Naive thymus-derived CD4-positive, alpha-beta T cell (primary cell): ENCODE measurements at regions of chr6 and their contacts with region 1.

Region 1: GRCh38 chr6:15327271-15327670 is 81.4 kb downstream of the JARID2 start:
- DNase-seq: peak in 7 of 9 donors; percentile 26 to 59 (median 48)
- ATAC-seq: peak; percentile 74
- H3K4me3 ChIP-seq: no peak overlapping the region
- H3K4me3 Mint-ChIP-seq: peak overlapping the region in 5 of 10 donors; percentile 12 to 48 (median 45)
- H3K27ac ChIP-seq: no peak overlapping the region
- H3K27ac Mint-ChIP-seq: peak overlapping the region in 7 of 9 donors; percentile 44 to 90 (median 67)
- H3K4me1 ChIP-seq: peaks cover 26 to 54% of the 10 kb centered on the region in 2 donors
- H3K4me1 Mint-ChIP-seq: peaks cover 42 to 94% (median 81%) of the 10 kb centered on the region in 7 donors
- H3K27me3 ChIP-seq: no peaks in the 10 kb centered on the region
- H3K27me3 Mint-ChIP-seq: no peaks in the 10 kb centered on the region

Region 2: DNA sequence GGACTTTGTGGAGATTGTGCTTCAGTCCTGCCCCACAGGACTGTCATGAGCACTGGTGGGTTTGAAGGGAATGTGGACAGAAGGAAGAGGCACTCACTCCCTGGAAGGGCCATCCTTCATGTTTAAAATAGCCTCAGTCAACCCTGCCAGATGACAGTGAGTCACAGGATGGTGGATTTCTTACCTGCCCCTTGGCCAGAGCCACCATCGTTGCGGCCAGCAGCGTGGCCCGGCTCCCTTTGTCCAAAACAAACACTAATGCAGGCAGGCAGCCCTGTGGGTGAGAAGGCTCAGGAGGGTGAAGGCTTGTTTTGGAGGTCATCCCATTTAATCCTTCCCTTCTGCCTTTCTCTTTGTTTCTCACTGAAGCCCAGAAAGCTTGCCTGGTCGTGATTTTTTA is 787.0 kb before region 1 on chr6:
- CTCF ChIA-PET with region 1: no interaction called
- POLR2A ChIA-PET with region 1: no interaction called
- intact Hi-C with region 1: no loop called
- DNase-seq: no peak
- ATAC-seq: no peak
- H3K4me3 ChIP-seq: no peak overlapping the region
- H3K4me3 Mint-ChIP-seq: no peak overlapping the region
- H3K27ac ChIP-seq: no peak overlapping the region
- H3K27ac Mint-ChIP-seq: peak overlapping the region in 1 of 9 donors; percentile 17
- H3K4me1 ChIP-seq: no peaks in the 10 kb centered on the region
- H3K4me1 Mint-ChIP-seq: peaks cover 6 to 23% (median 20%) of the 10 kb centered on the region in 7 donors
- H3K27me3 ChIP-seq: no peaks in the 10 kb centered on the region
- H3K27me3 Mint-ChIP-seq: no peaks in the 10 kb centered on the region

Region 3: DNA sequence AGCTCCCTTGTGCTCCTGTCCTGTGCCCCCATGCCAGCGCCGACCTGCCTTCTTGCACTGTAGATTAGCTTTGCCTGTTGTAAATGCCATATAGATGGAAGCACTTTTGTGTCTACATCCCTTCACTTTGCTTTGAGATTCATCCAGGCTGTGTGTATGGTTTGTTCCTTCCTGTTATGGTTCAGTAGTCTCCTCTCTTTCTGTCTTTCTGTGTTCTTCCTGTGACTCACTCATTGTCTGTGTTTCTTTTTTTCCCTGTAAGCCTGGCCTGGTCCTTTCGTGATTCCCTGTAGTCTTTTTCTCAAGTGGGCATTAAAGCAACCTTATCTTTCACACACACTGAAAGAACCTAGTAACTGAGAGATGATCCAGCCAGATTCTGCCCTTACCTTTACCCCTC is 14.8 kb before region 1 on chr6:
- CTCF ChIA-PET with region 1: interaction called, 3 read pairs
- POLR2A ChIA-PET with region 1: no interaction called
- intact Hi-C with region 1: loop called in 1 of 2 experiments (anchors 1 kb)
- DNase-seq: peak in 3 of 9 donors; percentile 10 to 22 (median 20)
- ATAC-seq: peak; percentile 30
- H3K4me3 ChIP-seq: no peak overlapping the region
- H3K4me3 Mint-ChIP-seq: peak overlapping the region; percentile 3 to 61 (median 46)
- H3K27ac ChIP-seq: no peak overlapping the region
- H3K27ac Mint-ChIP-seq: peak overlapping the region; percentile 10 to 81 (median 47)
- H3K4me1 ChIP-seq: peaks cover 12 to 43% of the 10 kb centered on the region in 2 donors
- H3K4me1 Mint-ChIP-seq: peaks cover 66 to 98% (median 88%) of the 10 kb centered on the region in 7 donors
- H3K27me3 ChIP-seq: no peaks in the 10 kb centered on the region
- H3K27me3 Mint-ChIP-seq: no peaks in the 10 kb centered on the region

Region 4: GRCh38 chr6:15389765-15390723 is 62.8 kb after region 1 on chr6:
- CTCF ChIA-PET with region 1: no interaction called
- POLR2A ChIA-PET with region 1: no interaction called
- intact Hi-C with region 1: loop called (anchors 1 to 5 kb)
- DNase-seq: peak in 5 of 9 donors; percentile 15 to 36 (median 31)
- ATAC-seq: peak; percentile 39
- H3K4me3 ChIP-seq: no peak overlapping the region
- H3K4me3 Mint-ChIP-seq: peak overlapping the region in 9 of 10 donors; percentile 5 to 56 (median 41)
- H3K27ac ChIP-seq: no peak overlapping the region
- H3K27ac Mint-ChIP-seq: peak overlapping the region in 6 of 9 donors; percentile 17 to 62 (median 32)
- H3K4me1 ChIP-seq: peaks cover 0 to 24% of the 10 kb centered on the region in 2 donors
- H3K4me1 Mint-ChIP-seq: peaks cover 41 to 72% (median 66%) of the 10 kb centered on the region in 7 donors
- H3K27me3 ChIP-seq: no peaks in the 10 kb centered on the region
- H3K27me3 Mint-ChIP-seq: no peaks in the 10 kb centered on the region

Region 5: DNA sequence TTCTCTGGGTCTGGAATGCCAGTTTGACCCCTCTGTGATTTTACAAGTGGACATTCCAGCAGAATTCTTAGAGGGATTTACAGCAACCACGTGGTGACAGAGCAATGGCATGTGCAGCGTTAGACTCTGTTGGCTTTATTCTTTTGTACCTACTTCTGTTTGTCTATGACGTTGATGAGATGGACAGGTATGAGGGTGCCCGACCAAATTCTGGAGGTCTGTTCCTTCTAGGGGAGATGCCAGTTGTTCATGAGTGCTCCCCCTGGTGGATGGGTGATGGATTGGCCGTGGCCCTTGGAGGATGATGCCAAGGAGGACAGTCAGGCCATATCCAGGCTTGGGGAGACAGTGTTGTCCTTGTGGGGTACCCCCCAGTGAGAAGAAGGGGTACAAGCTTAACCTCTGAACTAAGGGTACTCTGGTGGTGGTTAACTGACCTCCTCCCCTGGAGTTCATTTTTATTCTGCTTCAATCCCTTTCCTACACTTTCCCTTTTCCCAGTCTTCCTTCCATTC is 137.0 kb after region 1 on chr6:
- CTCF ChIA-PET with region 1: interaction called, 3 read pairs
- POLR2A ChIA-PET with region 1: no interaction called
- intact Hi-C with region 1: loop called (anchors 1 kb)
- DNase-seq: peak; percentile 11 to 56 (median 37)
- ATAC-seq: peak; percentile 86
- H3K4me3 ChIP-seq: no peak overlapping the region
- H3K4me3 Mint-ChIP-seq: no peak overlapping the region
- H3K27ac ChIP-seq: no peak overlapping the region
- H3K27ac Mint-ChIP-seq: peak overlapping the region in 2 of 9 donors; percentile 0 to 7
- H3K4me1 ChIP-seq: no peaks in the 10 kb centered on the region
- H3K4me1 Mint-ChIP-seq: peaks cover 33 to 71% (median 56%) of the 10 kb centered on the region in 7 donors
- H3K27me3 ChIP-seq: no peaks in the 10 kb centered on the region
- H3K27me3 Mint-ChIP-seq: no peaks in the 10 kb centered on the region